Activated CD4-positive, alpha-beta memory T cell treated with anti-CD3 and anti-CD28 coated beads, Interleukin-2, amount 10 ng/mL, durations not matched to agents 7 days and 5 days (primary cell): ENCODE measurements at regions of chr9 and their contacts with region 1.

Region 1: GRCh38 chr9:126398403-126399058 is 71.9 kb downstream of the MVB12B start:
- DNase-seq: peak; percentile 78
- H3K4me3 Mint-ChIP-seq: no peak overlapping the region
- H3K27ac Mint-ChIP-seq: no peak overlapping the region
- H3K4me1 Mint-ChIP-seq: peaks cover 62% of the 10 kb centered on the region
- H3K27me3 Mint-ChIP-seq: peaks cover 3% of the 10 kb centered on the region

Region 2: DNA sequence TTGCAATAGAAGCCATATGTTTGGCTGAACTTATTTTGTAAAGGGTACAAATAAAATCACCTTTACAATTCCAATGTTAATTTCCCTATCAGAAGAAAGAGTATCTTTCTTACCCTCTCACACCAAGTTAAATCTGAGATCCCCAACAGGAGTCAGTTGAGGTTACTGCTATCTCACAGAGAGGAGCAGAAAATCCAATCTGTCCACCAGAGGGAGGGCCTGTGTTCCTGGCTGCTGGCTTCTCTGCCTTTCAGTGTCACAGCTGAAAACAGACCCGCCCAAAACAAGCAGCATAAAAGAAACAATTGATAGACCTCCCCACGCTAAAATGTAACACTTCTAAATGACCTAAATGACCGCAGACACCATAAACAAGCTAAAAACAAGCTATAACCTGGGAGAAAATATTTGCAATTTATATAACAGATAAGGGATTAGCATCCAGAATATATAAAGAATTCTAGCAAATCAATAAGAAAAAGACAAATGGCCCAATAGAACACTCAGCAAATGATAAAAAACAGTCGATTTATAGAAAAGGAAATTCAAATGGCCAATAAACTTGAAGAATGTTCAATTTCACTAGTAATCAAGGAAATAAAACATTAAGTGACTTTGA is 96.4 kb before region 1 on chr9:
- CTCF ChIA-PET with region 1: interaction called, 44 read pairs
- POLR2A ChIA-PET with region 1: no interaction called
- DNase-seq: peak; percentile 59
- H3K4me3 Mint-ChIP-seq: no peak overlapping the region
- H3K27ac Mint-ChIP-seq: no peak overlapping the region
- H3K4me1 Mint-ChIP-seq: peaks cover 2% of the 10 kb centered on the region
- H3K27me3 Mint-ChIP-seq: peaks cover 4% of the 10 kb centered on the region

Region 3: DNA sequence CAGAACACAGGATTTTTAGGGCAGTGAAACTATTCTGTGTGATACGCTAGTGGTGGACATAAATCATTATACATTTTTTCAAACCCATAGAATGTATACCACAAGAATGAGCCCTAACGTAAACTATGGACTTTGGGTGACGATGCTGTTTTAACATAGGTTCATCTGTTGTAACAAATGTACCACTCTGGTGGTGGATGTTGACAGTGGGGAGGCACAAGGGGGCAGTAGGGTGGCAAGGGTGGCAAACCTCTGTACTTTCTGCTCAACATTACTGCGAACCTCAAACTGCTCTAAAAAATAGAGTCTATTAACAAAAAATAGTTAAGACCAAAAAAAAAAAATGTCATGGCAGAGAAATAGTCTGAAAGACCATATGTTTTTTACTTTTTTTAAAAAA is 81.0 kb before region 1 on chr9:
- CTCF ChIA-PET with region 1: interaction called, 11 read pairs
- POLR2A ChIA-PET with region 1: no interaction called
- DNase-seq: peak; percentile 26
- H3K4me3 Mint-ChIP-seq: no peak overlapping the region
- H3K27ac Mint-ChIP-seq: no peak overlapping the region
- H3K4me1 Mint-ChIP-seq: no peaks in the 10 kb centered on the region
- H3K27me3 Mint-ChIP-seq: peaks cover 13% of the 10 kb centered on the region

Region 4: GRCh38 chr9:126411225-126411947 is 12.9 kb after region 1 on chr9:
- CTCF ChIA-PET with region 1: interaction called, 19 read pairs
- POLR2A ChIA-PET with region 1: interaction called, 5 read pairs
- DNase-seq: peak; percentile 54
- H3K4me3 Mint-ChIP-seq: peak overlapping the region; percentile 44
- H3K27ac Mint-ChIP-seq: peak overlapping the region; percentile 87
- H3K4me1 Mint-ChIP-seq: peaks cover 30% of the 10 kb centered on the region
- H3K27me3 Mint-ChIP-seq: no peaks in the 10 kb centered on the region

Region 5: DNA sequence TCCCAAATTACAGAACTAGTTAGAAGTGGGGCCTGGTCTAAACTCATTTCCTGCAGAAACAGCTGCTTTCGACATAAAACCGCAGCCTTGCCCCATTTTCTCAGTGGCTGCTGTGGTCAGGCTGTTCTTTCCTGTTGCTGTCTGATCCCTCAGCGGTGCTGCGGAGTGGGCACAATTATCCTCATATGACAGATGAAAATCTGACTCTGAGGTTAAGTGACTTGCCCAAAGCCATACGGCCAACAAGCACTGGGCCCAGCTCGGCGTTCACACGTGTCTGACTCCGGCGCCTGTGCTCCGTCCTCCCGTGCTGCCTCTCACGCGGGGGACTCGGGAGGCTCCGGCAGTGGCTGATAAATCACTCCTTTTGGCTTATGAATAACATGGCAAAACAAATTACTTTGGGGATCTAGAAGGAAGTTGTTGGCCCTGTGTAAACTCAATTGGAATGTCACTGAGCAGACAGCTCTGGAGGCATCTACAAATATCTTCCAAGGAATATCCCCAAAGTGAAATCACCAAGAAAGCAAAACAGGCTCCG is 72.6 kb after region 1 on chr9:
- CTCF ChIA-PET with region 1: interaction called, 23 read pairs
- POLR2A ChIA-PET with region 1: interaction called, 4 read pairs
- DNase-seq: peak; percentile 92
- H3K4me3 Mint-ChIP-seq: peak overlapping the region; percentile 45
- H3K27ac Mint-ChIP-seq: peak overlapping the region; percentile 83
- H3K4me1 Mint-ChIP-seq: peaks cover 46% of the 10 kb centered on the region
- H3K27me3 Mint-ChIP-seq: peaks cover 64% of the 10 kb centered on the region

Region 6: GRCh38 chr9:126490871-126491567 is 92.5 kb after region 1 on chr9:
- CTCF ChIA-PET with region 1: interaction called, 57 read pairs
- POLR2A ChIA-PET with region 1: interaction called, 8 read pairs
- DNase-seq: peak; percentile 60
- H3K4me3 Mint-ChIP-seq: no peak overlapping the region
- H3K27ac Mint-ChIP-seq: no peak overlapping the region
- H3K4me1 Mint-ChIP-seq: peaks cover 12% of the 10 kb centered on the region
- H3K27me3 Mint-ChIP-seq: peaks cover 29% of the 10 kb centered on the region

Region 7: DNA sequence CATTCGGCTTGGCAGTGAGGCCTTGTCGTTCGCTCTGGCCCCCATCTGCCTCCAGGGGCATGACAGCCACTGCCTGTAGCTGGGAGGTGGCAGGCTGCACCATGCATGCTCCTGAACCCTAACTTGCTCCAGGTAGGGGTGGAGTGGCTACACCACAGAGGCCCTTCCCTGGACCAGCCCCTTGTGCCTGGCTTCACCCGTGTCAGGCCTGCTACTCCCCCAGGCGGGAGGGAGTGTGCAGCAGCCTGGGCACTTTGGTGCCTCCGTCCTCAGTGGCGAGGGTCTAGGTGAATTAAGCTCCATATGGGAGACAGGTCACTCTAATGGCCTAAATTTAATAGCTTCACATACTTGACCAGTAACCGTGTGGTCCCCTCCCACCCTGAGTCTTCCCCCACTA is 155.8 kb after region 1 on chr9:
- CTCF ChIA-PET with region 1: no interaction called
- POLR2A ChIA-PET with region 1: no interaction called
- DNase-seq: no peak
- H3K4me3 Mint-ChIP-seq: no peak overlapping the region
- H3K27ac Mint-ChIP-seq: no peak overlapping the region
- H3K4me1 Mint-ChIP-seq: no peaks in the 10 kb centered on the region
- H3K27me3 Mint-ChIP-seq: peaks cover 10% of the 10 kb centered on the region